ENCODE measurements at regions of chr7 and their contacts with region 1.

Region 1: DNA sequence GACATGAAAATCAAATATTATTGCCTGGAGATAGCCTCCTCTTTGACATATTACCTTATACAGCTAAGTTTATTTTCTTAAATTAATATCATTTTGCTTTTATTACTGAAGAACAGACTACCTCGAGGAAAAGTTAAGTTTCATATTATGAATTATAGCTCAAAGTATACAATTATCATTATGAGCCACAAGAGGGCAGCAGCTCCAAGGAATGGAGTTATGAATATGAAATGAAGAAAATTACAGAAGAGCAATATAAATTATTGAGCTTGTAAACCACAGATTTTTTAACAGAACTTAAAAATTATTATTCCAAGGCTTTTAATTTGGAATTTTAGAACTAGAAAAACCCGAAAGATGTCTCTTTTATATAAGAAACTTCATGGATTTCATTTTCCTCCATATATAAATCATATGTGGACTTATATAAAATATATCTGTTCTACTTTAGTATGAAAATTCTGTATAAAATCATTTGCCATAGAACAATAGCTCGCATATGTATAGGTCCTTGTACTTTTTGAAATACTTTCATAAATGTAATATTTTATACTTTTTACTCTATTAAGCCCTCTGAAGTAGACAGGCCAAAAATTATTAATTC is 40.1 kb downstream of the IQUB start:
- DNase-seq: peak; percentile 14
- H3K4me3 Mint-ChIP-seq: no peak overlapping the region
- H3K27ac Mint-ChIP-seq: no peak overlapping the region
- H3K4me1 Mint-ChIP-seq: no peaks in the 10 kb centered on the region
- H3K27me3 Mint-ChIP-seq: peaks cover 11% of the 10 kb centered on the region

Region 2: GRCh38 chr7:123534383-123535260 is 40.3 kb after region 1 on chr7 and contains the start of gene IQUB:
- CTCF ChIA-PET with region 1: interaction called, 10 read pairs
- POLR2A ChIA-PET with region 1: no interaction called
- intact Hi-C with region 1: loop called (anchors 1 kb)
- DNase-seq: peak; percentile 98
- H3K4me3 Mint-ChIP-seq: peak within 1 kb of the TSS; percentile 78
- H3K27ac Mint-ChIP-seq: peak within 1 kb of the TSS; percentile 72
- H3K4me1 Mint-ChIP-seq: peaks cover 29% of the 10 kb centered on the region
- H3K27me3 Mint-ChIP-seq: peaks cover 20% of the 10 kb centered on the region
- total RNA-seq, gene IQUB: 0.10 TPM in 1 of 2 experiments, not detected in the other

Region 3: DNA sequence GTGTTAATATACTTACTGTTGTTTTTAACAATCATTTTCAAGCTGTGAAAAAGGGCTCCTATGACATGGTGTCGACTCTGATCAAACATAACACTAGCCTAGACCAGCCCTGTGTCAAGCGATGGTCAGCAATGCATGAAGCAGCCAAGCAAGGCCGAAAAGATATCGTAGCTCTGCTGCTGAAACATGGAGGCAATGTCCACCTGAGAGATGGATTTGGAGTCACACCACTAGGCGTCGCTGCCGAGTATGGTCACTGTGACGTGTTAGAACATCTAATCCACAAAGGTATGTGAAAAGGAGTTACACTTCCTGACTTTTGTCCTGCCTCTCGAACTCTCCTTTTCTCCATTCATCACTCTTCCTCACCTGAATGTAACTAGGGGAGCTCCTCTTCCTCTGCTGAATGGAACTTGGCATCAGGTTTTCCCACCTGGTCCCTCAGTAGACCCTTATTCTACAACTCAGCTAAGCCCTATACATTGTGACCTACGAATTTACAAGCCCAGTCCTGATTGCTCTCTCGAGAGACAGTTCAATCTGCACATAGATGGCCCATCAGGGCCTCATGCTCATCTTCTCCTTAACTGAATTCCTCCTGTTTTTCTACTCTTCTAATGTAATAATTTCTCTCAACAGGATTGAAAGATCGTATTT is 130.4 kb after region 1 on chr7:
- CTCF ChIA-PET with region 1: interaction called, 16 read pairs
- POLR2A ChIA-PET with region 1: no interaction called
- intact Hi-C with region 1: loop called (anchors 1 kb)
- DNase-seq: peak; percentile 80
- H3K4me3 Mint-ChIP-seq: no peak overlapping the region
- H3K27ac Mint-ChIP-seq: no peak overlapping the region
- H3K4me1 Mint-ChIP-seq: no peaks in the 10 kb centered on the region
- H3K27me3 Mint-ChIP-seq: no peaks in the 10 kb centered on the region